Right ventricle myocardium inferior (tissue), 1 donor: ENCODE measurements at regions of chr7 and their contacts with region 1.

Region 1: DNA sequence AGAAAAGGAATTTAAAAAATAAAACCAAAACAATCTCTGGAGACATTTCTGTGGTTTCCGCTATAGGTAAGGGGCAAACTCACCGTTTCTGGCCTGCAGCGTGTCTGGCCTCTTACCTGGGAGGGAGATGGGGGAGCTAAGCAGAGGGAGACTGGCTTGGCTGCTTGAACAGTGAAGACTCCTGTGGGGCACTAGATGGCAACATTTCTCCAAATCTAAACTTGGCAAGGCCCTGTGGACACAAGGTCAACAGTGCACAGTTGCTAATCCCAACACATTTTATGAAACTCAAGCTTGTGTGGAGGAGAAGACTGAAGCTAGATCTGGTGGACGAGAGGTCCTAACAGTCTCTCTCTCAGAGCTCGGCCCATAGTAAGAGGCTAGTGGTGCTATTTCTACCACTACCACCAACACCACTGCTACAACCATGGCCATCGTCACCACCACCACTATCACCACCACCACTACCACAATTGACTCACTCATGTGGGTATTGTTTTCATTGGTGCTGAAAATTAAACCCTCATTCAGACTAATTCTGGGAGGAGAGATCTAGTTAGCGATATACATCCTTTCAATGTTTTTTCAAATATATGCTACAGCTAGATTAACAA is 28.4 kb upstream of the CDHR3 start:
- DNase-seq: no peak
- ATAC-seq: peak; percentile 88

Region 2: GRCh38 chr7:105245398-105246114 is 689.1 kb before region 1 on chr7:
- intact Hi-C with region 1: no loop called
- DNase-seq: no peak
- ATAC-seq: peak; percentile 26

Region 3: GRCh38 chr7:105978035-105978434 is 43.4 kb after region 1 on chr7:
- intact Hi-C with region 1: loop called (anchors 2 kb)
- DNase-seq: no peak
- ATAC-seq: peak; percentile 81

Region 4: GRCh38 chr7:106009403-106010226 is 74.9 kb after region 1 on chr7:
- intact Hi-C with region 1: loop called (anchors 1 kb)
- DNase-seq: peak; percentile 90
- ATAC-seq: peak; percentile 93

Region 5: DNA sequence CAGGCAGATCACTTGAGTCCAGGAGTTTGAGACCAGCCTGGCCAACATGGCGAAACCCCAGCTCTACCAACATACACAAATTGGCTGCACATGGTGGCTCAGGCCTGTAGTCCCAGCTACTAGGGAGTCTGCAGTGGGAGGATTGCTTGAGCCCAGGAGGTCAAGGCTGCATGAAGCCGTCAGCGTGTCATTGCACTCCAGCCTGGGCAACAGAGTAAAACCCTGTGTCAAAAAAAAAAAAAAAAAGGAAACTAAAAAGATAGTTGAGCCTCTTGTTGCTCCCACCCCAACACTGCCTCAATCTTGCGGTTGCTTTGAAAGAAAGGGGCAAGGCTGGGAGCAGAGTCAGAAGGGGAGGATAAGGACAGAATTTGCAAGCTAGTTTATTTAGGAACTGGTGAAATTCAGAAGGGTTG is 107.5 kb after region 1 on chr7:
- intact Hi-C with region 1: loop called (anchors 2 kb)
- DNase-seq: no peak
- ATAC-seq: no peak